ENCODE measurements at regions of chr17 and their contacts with region 1.

Region 1: DNA sequence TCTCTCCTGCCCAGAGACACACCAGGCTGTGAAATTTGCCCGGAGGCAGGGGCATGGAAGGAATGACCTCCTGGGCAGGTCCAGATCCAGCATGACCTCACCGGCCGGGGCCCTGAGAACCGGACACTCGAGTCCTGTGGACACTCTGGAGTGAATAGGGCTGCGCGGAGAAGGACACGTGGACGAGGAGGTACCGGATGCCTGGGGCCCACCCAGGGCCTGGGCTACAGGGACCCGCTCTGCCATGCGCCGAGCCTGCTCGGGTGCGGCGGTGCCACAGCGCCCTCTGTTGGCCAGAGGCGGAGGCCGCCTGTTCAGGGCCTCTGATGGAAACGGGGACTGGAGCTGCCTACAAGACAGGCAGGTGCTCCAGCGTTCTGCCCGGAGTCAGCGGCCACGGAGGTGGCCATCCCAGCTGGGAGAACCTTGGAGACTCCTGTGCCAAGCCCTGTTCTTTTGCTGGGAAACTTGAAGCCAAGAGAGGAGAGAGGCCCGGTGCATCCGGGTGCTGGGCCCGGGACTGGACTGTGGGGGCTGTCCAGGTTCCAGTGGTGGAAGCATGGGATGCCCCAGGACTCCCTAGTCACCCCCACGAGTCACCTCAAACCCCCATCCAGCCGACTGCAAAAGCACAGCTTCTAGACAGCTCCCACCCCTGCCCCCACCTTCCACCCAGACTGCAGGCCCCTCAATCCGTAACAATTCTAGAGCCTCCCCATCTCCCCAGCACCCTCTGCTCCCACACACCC is 19.3 kb upstream of the NXPH3 start:
- DNase-seq: peak; percentile 82 to 94
- ATAC-seq: peak; percentile 89 to 98
- H3K4me3 ChIP-seq: no peak overlapping the region
- H3K27ac ChIP-seq: peak overlapping the region; percentile 46 to 64
- H3K4me1 ChIP-seq: 0 out of 3 replicates have a peak, but pooled peaks cover 3% of the 10 kb centered on the region
- CTCF ChIP-seq: peak; percentile 99
- EP300 ChIP-seq: no peak
- POLR2A ChIP-seq: no peak; the same call in 1 of the 2 replicates
- RAD21 ChIP-seq: peak; percentile 97 to 98

Region 2: DNA sequence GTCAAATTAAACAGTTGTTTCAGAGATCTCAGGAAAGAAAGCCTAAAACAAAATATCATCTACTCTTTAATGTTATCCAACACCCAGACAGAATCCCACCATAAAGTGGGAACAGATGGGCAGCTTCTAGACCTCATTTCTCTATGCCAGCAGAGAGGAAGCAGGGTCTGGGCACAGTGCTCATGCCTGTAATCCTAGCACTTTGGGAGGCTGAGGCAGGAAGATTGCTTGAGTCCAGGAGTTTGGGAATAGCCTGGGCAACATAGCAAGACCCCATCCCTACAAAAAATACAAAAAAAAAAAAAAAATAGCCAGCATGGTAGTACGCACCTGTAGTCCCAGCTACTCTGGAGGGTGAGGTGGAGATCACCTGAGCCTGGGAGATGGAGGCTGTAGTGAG is 180.9 kb before region 1 on chr17:
- CTCF ChIA-PET with region 1: interaction called, 17 read pairs
- POLR2A ChIA-PET with region 1: no interaction called
- DNase-seq: no peak
- ATAC-seq: no peak
- H3K4me3 ChIP-seq: no peak overlapping the region
- H3K27ac ChIP-seq: no peak overlapping the region
- H3K4me1 ChIP-seq: no peaks in the 10 kb centered on the region
- CTCF ChIP-seq: no peak
- EP300 ChIP-seq: no peak
- POLR2A ChIP-seq: no peak
- RAD21 ChIP-seq: no peak

Region 3: GRCh38 chr17:49443862-49444261 is 112.5 kb before region 1 on chr17:
- CTCF ChIA-PET with region 1: interaction called, 317 read pairs
- POLR2A ChIA-PET with region 1: no interaction called
- DNase-seq: no peak
- ATAC-seq: no peak
- H3K4me3 ChIP-seq: no peak overlapping the region
- H3K27ac ChIP-seq: no peak overlapping the region
- H3K4me1 ChIP-seq: no peaks in the 10 kb centered on the region
- CTCF ChIP-seq: no peak
- EP300 ChIP-seq: no peak
- POLR2A ChIP-seq: no peak
- RAD21 ChIP-seq: no peak

Region 4: DNA sequence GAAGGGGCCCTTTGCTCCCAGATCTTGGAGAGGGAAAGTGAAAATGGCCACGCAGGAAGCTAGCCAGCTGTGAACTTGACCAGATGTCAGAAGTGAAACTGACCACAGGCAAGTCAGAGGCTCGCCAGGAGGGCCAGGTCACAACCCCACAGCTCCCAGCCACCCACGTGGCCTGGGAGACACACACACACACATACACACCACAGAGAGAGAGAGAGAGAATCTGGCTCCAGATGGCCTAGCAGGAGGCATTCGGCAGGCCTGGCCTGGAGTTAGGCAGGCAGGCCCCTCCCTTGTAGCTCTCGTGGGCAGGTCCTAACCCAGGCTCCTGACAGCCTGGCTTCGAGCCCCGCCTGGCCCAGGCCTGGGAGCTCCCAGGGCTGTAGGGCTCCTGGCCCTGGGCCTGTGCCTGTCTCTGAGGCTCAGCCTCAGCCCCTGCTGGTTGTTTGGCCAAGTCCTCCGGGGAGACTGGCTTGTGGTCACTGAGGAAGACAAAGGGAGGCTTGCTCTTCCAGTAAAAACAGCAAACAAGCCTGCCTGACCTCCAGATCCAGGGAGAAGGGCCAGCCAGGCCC is 41.1 kb before region 1 on chr17:
- CTCF ChIA-PET with region 1: interaction called, 159 read pairs
- POLR2A ChIA-PET with region 1: no interaction called
- DNase-seq: peak; percentile 49 to 68
- ATAC-seq: peak; percentile 63 to 88
- H3K4me3 ChIP-seq: no peak overlapping the region
- H3K27ac ChIP-seq: peak overlapping the region; percentile 11 to 76; a peak in 3 of 6 replicates
- H3K4me1 ChIP-seq: 0 out of 3 replicates have a peak, but pooled peaks cover 6% of the 10 kb centered on the region
- CTCF ChIP-seq: no peak
- EP300 ChIP-seq: no peak
- POLR2A ChIP-seq: no peak
- RAD21 ChIP-seq: no peak

Region 5: DNA sequence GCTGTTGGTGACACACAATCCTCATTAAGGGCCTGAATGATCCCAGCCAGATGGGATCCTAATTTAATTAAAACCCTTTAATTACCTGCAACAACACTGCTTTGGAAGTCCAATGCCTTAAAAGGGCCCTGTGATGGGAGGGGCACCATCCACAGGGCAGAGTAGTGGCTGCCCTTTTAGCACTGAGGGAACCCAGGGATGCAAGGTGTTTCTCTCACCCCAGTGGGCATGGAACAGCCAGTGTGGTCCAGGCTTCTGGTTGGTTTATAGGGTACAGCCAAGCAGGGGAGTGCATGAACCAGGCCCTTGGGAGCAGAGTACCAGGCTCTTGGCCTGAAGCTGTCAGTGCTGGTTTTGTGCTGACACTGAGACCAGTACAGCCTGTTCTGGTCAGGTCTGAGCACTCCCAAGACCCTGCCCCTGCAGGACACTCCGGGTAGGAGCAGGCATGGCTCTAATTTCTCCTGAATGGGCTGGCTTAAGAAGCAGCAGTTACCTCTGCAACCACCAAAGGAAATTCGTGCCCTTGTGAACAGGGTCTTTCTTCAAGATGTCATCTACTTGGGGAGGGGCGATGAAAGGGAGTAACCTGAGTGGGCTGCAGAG is 29.1 kb after region 1 on chr17:
- CTCF ChIA-PET with region 1: interaction called, 10 read pairs
- POLR2A ChIA-PET with region 1: no interaction called
- DNase-seq: peak; percentile 59 to 72
- ATAC-seq: peak; percentile 81 to 91
- H3K4me3 ChIP-seq: no peak overlapping the region
- H3K27ac ChIP-seq: no peak overlapping the region
- H3K4me1 ChIP-seq: no peaks in the 10 kb centered on the region
- CTCF ChIP-seq: no peak
- EP300 ChIP-seq: no peak
- POLR2A ChIP-seq: no peak
- RAD21 ChIP-seq: no peak

Region 6: GRCh38 chr17:49742166-49742638 is 185.8 kb after region 1 on chr17:
- CTCF ChIA-PET with region 1: interaction called, 15 read pairs
- POLR2A ChIA-PET with region 1: no interaction called
- DNase-seq: no peak
- ATAC-seq: no peak
- H3K4me3 ChIP-seq: no peak overlapping the region
- H3K27ac ChIP-seq: no peak overlapping the region
- H3K4me1 ChIP-seq: no peaks in the 10 kb centered on the region
- CTCF ChIP-seq: no peak
- EP300 ChIP-seq: no peak
- POLR2A ChIP-seq: no peak
- RAD21 ChIP-seq: no peak

Measured in A549 (cell line).